Lower leg skin (tissue), 4 donors: ENCODE measurements at regions of chr7 and their contacts with region 1.

Region 1: DNA sequence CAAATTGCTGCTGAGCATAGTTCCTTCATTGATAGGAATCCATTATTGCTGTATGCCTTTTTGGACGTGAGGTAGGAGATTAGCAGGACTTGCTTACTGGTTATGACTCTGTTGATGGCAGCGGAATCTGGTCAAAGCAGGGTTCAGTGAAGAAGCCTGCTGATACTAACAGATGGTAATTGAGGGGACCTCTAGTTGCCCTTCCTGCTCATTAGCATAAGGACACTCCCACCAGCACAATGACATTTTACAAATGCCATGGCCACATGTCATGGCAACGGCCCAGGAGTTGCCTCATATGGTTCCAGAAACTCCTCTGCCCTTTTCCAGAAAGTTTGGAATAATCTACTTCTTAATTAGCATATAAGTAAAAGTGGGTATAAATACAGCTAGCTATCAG is 417.5 kb downstream of the CDC14C start:
- DNase-seq: no peak
- H3K4me3 ChIP-seq: no peak overlapping the region
- CTCF ChIP-seq: no peak
- POLR2A ChIP-seq: no peak

Region 2: GRCh38 chr7:47444379-47445057 is 1897.3 kb before region 1 on chr7:
- intact Hi-C with region 1: loop called (anchors 5 kb)
- DNase-seq: no peak
- H3K4me3 ChIP-seq: no peak overlapping the region
- CTCF ChIP-seq: no peak
- POLR2A ChIP-seq: no peak